CD4-positive, alpha-beta memory T cell (primary cell): ENCODE measurements at regions of chr1 and their contacts with region 1.

Region 1: GRCh38 chr1:228405987-228406265 is 709 bp downstream of the TRIM11 start:
- DNase-seq: no peak
- H3K4me3 ChIP-seq: peak overlapping the region; percentile 29 to 72
- H3K4me3 Mint-ChIP-seq: peak overlapping the region; percentile 92 to 97 (median 94)
- H3K27ac ChIP-seq: peak overlapping the region; percentile 81
- H3K27ac Mint-ChIP-seq: peak overlapping the region; percentile 47 to 92 (median 87)
- H3K4me1 ChIP-seq: peaks cover 52% of the 10 kb centered on the region
- H3K4me1 Mint-ChIP-seq: peaks cover 29 to 72% (median 50%) of the 10 kb centered on the region in 4 donors
- H3K27me3 ChIP-seq: no peaks in the 10 kb centered on the region
- H3K27me3 Mint-ChIP-seq: no peaks in the 10 kb centered on the region

Region 2: DNA sequence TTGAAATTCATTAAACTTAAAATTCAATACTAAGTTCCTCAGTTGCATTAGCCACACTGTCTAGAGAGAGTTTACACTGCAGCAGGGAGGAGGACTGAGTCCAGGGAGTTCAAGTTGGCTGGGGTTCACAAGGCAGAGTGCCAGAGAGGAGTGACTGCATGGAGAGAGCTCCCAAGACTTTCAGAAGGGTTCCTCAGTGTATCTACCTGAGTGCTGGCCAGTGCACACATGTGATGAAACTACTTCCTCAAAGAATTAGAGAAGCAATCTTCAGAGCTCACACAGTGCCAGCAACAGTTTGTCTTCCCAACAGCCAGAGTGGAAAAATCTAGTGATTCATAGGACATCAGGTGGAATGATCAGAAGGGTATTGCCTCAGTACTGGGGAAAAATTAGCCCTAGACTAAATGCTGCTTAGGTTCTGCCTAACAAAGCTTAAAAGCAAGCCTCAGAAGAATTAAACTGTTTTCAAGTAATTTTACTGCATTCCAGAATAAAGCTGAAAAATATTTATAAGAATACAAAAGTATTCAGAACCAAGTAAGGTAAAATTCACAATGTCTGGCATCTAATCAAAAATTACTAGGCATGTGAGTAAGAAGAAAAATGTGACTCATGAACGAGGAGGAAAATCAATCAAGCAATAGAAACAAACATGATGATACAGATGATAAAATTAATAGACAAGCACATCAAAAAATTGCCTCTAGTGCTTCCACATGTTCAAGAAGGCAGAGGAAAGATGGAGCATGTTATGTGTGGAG is 409.6 kb before region 1 on chr1:
- CTCF ChIA-PET with region 1: no interaction called
- POLR2A ChIA-PET with region 1: no interaction called
- intact Hi-C with region 1: no loop called
- DNase-seq: no peak
- H3K4me3 ChIP-seq: no peak overlapping the region
- H3K4me3 Mint-ChIP-seq: no peak overlapping the region
- H3K27ac ChIP-seq: no peak overlapping the region
- H3K27ac Mint-ChIP-seq: no peak overlapping the region
- H3K4me1 ChIP-seq: no peaks in the 10 kb centered on the region
- H3K4me1 Mint-ChIP-seq: no peaks in the 10 kb centered on the region
- H3K27me3 ChIP-seq: no peaks in the 10 kb centered on the region
- H3K27me3 Mint-ChIP-seq: peaks cover 11 to 14% of the 10 kb centered on the region in 2 donors

Region 3: DNA sequence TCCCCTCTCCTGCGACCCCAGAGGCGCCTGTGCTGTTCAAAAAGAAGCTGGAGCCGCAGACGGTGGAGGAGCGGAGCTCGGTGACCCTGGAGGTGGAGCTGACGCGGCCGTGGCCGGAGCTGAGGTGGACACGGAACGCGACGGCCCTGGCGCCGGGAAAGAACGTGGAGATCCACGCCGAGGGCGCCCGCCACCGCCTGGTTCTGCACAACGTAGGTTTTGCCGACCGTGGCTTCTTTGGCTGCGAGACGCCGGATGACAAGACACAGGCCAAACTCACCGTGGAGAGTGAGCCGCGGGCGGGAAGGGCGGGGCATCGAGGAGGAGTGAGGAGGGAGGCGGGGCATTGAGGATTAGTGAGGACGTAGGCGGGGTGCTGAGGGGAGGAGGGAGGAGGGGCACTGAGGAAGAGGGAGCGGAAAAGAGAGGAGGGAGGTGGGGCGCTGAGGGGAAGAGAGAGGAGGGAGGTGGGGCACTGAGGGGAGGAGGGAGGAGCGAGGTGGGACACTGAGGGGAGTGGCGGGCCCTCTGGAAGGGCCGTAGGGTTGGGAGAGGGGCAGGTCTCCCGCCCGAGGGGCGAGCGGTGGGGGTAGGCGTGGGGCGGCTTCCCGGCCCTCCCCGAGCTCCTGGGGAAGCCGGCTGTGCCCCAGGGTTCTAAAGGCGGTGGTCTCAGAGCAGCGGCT is 130.0 kb before region 1 on chr1:
- CTCF ChIA-PET with region 1: no interaction called
- POLR2A ChIA-PET with region 1: interaction called, 7 read pairs
- intact Hi-C with region 1: loop called (anchors 5 kb)
- DNase-seq: peak; percentile 83 to 90 (median 85)
- H3K4me3 ChIP-seq: peak overlapping the region; percentile 36 to 62
- H3K4me3 Mint-ChIP-seq: peak overlapping the region; percentile 79 to 86 (median 82)
- H3K27ac ChIP-seq: peak overlapping the region; percentile 53
- H3K27ac Mint-ChIP-seq: peak overlapping the region; percentile 41 to 86 (median 60)
- H3K4me1 ChIP-seq: peaks cover 8% of the 10 kb centered on the region
- H3K4me1 Mint-ChIP-seq: peaks cover 4 to 19% (median 11%) of the 10 kb centered on the region in 4 donors
- H3K27me3 ChIP-seq: no peaks in the 10 kb centered on the region
- H3K27me3 Mint-ChIP-seq: no peaks in the 10 kb centered on the region

Region 4: DNA sequence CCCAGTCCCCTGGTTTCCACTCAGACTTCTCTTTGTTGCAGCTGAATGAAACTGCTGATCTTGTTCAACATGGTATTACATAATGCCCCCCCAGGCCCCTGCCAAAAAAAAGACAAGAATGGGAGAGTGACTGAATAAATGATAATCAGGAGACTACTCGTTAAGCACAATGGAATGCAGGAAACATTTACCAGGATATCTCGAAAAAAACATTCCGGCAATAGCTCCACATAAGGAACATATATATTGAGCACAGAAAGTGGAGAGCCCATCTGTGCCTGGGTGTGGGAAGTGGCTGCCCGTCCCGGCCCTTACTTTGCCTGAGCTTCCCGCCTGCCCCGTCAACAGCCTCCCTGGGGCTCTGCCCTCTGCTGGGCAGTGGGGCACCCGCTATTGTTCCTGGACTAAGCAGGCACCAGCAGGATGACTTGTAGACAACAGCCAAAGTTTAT is 12.7 kb before region 1 on chr1:
- CTCF ChIA-PET with region 1: no interaction called
- POLR2A ChIA-PET with region 1: interaction called, 24 read pairs
- intact Hi-C with region 1: no loop called
- DNase-seq: no peak
- H3K4me3 ChIP-seq: no peak overlapping the region
- H3K4me3 Mint-ChIP-seq: no peak overlapping the region
- H3K27ac ChIP-seq: no peak overlapping the region
- H3K27ac Mint-ChIP-seq: peak overlapping the region in 4 of 7 donors; percentile 10 to 56 (median 45)
- H3K4me1 ChIP-seq: peaks cover 8% of the 10 kb centered on the region
- H3K4me1 Mint-ChIP-seq: peaks cover 6 to 15% (median 11%) of the 10 kb centered on the region in 4 donors
- H3K27me3 ChIP-seq: no peaks in the 10 kb centered on the region
- H3K27me3 Mint-ChIP-seq: no peaks in the 10 kb centered on the region

Region 5: DNA sequence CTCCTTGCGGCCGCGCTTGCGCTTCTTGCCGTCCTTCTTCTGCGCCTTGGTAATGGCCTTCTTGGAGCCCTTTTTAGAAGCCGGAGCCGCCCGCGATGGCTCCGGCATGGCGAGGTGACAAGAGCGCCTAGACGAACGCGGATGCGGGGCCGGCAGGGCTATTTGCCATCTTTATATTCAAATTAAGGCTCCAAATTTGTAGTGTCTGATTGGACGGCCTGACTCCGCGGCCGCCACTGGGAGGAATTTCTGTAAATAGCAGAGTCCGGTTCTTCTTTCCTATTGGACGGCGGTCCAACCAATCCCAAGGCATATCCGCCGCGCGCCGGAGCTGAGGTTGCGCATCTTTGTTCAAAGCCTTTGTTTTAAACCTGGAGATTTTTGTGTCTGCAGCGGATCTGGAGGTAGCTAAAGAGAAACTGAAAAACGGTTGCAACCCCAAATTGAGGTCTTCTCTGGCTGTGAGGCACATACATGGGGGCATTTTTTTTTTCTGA is 58.6 kb after region 1 on chr1:
- CTCF ChIA-PET with region 1: no interaction called
- POLR2A ChIA-PET with region 1: interaction called, 55 read pairs
- intact Hi-C with region 1: loop called (anchors 2 kb)
- DNase-seq: peak; percentile 90 to 94 (median 91)
- H3K4me3 ChIP-seq: peak overlapping the region; percentile 51 to 85
- H3K4me3 Mint-ChIP-seq: peak overlapping the region; percentile 81 to 88 (median 86)
- H3K27ac ChIP-seq: peak overlapping the region; percentile 39
- H3K27ac Mint-ChIP-seq: peak overlapping the region; percentile 68 to 92 (median 84)
- H3K4me1 ChIP-seq: peaks cover 38% of the 10 kb centered on the region
- H3K4me1 Mint-ChIP-seq: peaks cover 31 to 57% (median 46%) of the 10 kb centered on the region in 4 donors
- H3K27me3 ChIP-seq: no peaks in the 10 kb centered on the region
- H3K27me3 Mint-ChIP-seq: peaks cover 2 to 7% of the 10 kb centered on the region in 2 donors

Region 6: DNA sequence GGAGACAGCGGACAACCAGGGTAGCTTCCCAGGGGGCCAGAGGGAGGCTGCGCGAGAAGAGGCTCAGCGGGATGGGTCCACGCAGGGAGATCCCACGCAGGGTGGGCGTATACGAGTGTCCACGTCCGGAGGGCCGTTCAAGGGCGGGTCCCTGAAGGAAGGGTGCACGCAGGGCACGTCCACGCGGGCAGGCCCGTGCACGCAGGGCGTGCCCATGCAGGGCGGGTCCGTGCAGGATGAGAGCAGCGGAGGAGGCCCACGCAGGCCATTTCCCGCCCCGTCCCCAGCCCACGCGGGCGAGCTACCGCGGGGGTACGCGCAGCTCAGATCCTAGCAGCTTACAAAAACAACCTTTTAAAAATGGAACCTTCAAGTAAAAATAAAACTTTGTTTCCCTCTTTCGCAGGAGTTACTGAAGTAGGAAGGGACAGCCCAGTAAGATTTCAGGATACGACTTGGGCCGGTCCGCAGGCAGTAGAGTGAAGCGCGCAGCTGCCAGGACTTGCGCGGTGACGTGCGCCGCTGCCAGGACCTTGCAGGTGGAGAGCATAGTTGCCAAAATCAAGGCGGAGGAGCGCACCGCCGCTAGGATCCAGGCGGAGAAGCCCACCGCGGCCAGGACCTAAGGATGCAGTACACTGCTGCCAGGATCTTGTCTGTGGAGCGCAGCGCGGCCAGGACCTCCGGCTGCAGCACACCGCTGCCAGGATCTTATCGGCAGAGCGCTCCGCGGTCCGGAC is 80.8 kb after region 1 on chr1:
- CTCF ChIA-PET with region 1: interaction called, 3 read pairs
- POLR2A ChIA-PET with region 1: interaction called, 15 read pairs
- intact Hi-C with region 1: loop called (anchors 2 kb)
- DNase-seq: peak; percentile 83 to 90 (median 87)
- H3K4me3 ChIP-seq: peak overlapping the region; percentile 89 to 100
- H3K4me3 Mint-ChIP-seq: peak overlapping the region; percentile 88 to 98 (median 94)
- H3K27ac ChIP-seq: peak overlapping the region; percentile 99
- H3K27ac Mint-ChIP-seq: peak overlapping the region; percentile 99 to 100 (median 100)
- H3K4me1 ChIP-seq: peaks cover 32% of the 10 kb centered on the region
- H3K4me1 Mint-ChIP-seq: peaks cover 11 to 44% (median 30%) of the 10 kb centered on the region in 4 donors
- H3K27me3 ChIP-seq: no peaks in the 10 kb centered on the region
- H3K27me3 Mint-ChIP-seq: no peaks in the 10 kb centered on the region